ENCODE measurements at regions of chr9 and their contacts with region 1.

Region 1: DNA sequence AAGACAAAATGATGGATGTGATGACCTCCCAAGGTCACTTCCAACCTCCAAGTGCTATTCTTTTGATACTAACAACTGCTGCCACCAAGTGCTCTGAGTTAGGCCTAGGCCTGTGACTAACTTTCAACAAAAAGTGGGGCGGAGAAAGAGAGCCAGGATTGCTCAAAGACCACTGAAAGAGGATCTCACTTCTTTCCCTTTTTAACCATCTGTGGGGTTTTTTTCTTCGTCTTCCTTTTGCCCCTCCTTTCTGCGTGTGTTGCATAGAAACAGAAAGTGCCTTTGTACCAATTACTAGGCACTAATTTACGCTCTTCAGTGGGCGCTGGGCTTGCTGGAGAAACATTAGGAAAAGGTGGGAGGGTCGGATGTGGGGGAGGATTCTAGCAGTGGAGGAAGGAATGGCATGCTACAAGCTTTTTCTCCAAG is 8.0 kb downstream of the KLF9 start:
- DNase-seq: no peak
- ATAC-seq: peak; percentile 5 to 22

Region 2: GRCh38 chr9:69847491-69847890 is 559.0 kb before region 1 on chr9:
- intact Hi-C with region 1: no loop called
- DNase-seq: no peak
- ATAC-seq: no peak

Region 3: GRCh38 chr9:70340572-70340971 is 65.9 kb before region 1 on chr9:
- intact Hi-C with region 1: no loop called
- DNase-seq: no peak
- ATAC-seq: no peak

Region 4: DNA sequence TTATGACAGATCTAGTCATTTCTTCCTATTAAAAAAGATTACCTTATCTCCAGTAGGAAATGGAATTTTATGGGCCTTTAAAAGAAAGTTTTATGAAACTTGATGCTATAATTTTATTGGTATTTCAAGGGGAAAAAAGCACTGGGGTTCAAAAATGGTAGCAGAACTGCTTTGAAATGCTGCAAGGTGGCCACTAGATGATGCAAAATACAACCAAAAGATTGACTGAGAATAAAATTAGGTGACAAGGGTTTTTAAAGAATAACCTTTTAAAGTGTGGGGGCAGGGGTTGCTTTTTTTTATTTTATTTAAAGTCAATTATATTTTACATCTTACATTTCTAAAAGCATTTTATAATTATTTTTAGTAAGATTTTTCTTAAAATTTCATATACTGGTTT is 53.6 kb before region 1 on chr9:
- intact Hi-C with region 1: loop called in 1 of 2 experiments (anchors 10 kb)
- DNase-seq: no peak
- ATAC-seq: peak in 1 of 2 donors; percentile 55

Region 5: GRCh38 chr9:71490810-71491209 is 1084.4 kb after region 1 on chr9:
- intact Hi-C with region 1: no loop called
- DNase-seq: no peak
- ATAC-seq: no peak